ENCODE measurements at regions of chr2 and their contacts with region 1.

Region 1: DNA sequence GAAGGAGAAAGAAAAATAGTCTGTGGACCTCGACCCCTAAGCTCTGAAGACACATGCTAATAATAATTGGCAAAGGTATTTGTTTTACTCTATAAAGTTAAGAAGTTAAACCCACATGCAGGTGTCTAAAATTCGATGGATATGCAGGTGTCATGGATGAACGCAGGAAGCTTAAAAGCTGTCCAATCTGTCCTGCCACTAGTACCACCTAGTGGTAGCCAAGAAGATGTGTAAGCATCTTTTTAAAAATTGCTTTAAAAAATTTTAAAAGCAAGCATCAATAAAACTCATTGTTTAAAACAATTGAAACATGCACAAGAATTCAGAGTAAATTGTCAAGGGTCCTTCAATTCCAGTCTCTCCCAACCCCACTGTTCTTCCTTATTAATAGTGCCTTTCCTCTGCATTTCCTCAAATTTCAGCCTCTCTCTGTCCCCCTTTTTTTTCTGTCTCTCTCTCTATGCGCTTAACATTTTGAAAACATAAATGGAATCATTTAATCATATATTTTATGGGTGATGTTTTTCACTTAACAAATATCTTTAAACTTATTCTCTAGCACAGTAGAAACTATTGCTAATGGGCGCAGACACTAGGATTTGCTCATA is 30.6 kb upstream of the PPP3R1 start:
- DNase-seq: no peak
- H3K4me3 ChIP-seq: no peak overlapping the region
- H3K27ac ChIP-seq: no peak overlapping the region
- H3K4me1 ChIP-seq: 0 out of 2 replicates have a peak, but pooled peaks cover 7% of the 10 kb centered on the region
- H3K27me3 ChIP-seq: no peaks in the 10 kb centered on the region
- CTCF ChIP-seq: peak; percentile 86

Region 2: DNA sequence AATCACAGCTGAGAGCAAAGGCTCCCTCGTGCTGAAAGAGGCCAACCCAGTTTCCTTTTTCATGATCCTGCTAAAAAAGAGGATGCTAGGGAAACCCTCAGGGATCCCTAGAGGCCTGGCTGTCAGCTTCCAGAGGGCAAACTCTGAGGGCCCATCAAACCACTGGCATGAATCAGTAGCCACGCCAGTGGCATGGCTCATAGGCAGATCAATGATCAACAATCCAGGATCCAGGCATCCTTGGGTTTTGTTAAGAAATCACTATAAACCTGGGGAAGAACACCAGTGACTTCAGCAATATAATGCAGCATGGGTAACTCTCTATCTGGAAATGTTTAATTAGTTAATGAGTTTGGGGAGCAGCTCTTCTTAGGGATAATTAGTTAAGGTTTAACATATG is 506.6 kb before region 1 on chr2:
- CTCF ChIA-PET with region 1: interaction called, 11 read pairs
- POLR2A ChIA-PET with region 1: no interaction called
- intact Hi-C with region 1: no loop called
- DNase-seq: no peak
- H3K4me3 ChIP-seq: no peak overlapping the region
- H3K27ac ChIP-seq: no peak overlapping the region
- H3K4me1 ChIP-seq: no peaks in the 10 kb centered on the region
- H3K27me3 ChIP-seq: peaks cover 26% of the 10 kb centered on the region; the same call in 1 of the 2 replicates
- CTCF ChIP-seq: no peak

Region 3: DNA sequence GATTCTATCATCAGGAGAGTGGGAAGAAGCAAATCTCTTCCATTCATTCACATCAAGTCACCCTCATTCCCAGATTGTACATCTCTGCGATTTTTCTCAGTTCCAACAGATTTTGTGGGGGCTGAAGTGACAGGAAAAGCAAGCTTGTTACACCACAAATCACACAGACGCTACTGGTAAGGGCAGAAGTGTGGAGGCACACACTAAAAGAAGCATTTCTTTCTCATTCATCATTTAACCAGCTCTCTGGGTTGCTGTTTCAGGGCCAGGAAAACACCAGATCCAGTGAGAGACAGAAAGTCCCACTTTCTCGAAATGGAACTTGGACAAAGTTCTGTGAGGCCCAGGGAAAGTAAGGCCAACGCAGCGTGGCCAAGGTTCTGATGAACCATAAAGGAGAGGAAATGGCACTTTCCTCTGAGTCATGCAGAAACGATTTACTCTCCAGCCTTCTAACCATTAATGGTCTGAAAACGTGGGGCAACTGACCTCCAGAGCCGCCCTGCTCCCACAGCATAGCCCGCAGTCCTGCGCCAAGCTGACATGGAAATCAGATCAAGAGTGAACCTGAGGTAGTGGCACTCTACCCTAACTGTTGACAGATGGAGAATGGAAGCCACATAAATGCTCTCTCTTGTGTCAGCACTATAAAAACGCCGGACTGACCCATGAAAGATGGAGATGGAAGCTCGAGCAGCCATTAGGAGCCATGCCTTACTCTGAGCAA is 411.1 kb before region 1 on chr2:
- CTCF ChIA-PET with region 1: no interaction called
- POLR2A ChIA-PET with region 1: no interaction called
- intact Hi-C with region 1: no loop called
- DNase-seq: peak in 1 of 2 experiments; percentile 32
- H3K4me3 ChIP-seq: no peak overlapping the region
- H3K27ac ChIP-seq: no peak overlapping the region
- H3K4me1 ChIP-seq: no peaks in the 10 kb centered on the region
- H3K27me3 ChIP-seq: no peaks in the 10 kb centered on the region
- CTCF ChIP-seq: no peak

Region 4: DNA sequence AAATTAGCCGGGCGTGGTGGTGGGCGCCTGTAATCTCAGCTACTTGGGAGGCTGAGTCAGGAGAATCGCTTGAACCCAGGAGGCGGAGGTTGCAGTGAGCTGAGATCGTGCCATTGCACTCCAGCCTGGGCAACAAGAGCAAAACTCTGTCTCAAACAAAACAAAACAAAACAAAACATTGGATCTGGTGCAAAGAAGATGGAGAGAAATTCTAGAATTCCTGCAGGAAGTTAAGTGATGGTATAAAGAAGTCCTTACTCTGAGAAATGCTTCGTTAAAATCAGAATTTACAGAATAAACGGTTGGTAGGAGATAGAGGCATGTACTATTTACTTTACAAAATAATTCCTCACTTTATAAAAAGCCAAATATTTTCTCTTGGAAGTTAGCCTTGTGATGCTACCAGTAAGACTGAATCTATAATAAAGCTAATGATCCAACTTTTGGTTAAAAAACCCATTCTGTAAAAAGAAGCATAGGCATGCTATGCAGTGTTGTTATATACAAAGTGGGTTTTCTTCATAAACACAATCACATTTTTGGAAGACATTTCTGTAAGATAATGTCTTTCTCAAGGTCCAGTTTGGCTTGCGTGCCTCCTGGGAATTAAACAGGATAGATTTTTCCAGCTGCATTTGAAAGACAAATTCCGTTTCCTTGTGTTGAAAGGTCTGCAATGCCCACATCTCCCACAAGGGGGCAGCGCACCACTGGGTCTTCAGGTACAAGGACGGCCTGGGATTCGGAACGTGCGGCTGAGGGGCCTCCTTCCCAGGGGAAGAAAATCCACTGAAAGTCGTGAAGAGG is 160.8 kb before region 1 on chr2:
- CTCF ChIA-PET with region 1: interaction called, 12 read pairs
- POLR2A ChIA-PET with region 1: no interaction called
- intact Hi-C with region 1: loop called (anchors 1 kb)
- DNase-seq: peak; percentile 68 to 81
- H3K4me3 ChIP-seq: no peak overlapping the region
- H3K27ac ChIP-seq: no peak overlapping the region
- H3K4me1 ChIP-seq: no peaks in the 10 kb centered on the region
- H3K27me3 ChIP-seq: no peaks in the 10 kb centered on the region
- CTCF ChIP-seq: peak; percentile 99

Measured in PC-9 (cell line).